Posterior vena cava (tissue), 2 donors: ENCODE measurements at regions of chr19 and their contacts with region 1.

Region 1: DNA sequence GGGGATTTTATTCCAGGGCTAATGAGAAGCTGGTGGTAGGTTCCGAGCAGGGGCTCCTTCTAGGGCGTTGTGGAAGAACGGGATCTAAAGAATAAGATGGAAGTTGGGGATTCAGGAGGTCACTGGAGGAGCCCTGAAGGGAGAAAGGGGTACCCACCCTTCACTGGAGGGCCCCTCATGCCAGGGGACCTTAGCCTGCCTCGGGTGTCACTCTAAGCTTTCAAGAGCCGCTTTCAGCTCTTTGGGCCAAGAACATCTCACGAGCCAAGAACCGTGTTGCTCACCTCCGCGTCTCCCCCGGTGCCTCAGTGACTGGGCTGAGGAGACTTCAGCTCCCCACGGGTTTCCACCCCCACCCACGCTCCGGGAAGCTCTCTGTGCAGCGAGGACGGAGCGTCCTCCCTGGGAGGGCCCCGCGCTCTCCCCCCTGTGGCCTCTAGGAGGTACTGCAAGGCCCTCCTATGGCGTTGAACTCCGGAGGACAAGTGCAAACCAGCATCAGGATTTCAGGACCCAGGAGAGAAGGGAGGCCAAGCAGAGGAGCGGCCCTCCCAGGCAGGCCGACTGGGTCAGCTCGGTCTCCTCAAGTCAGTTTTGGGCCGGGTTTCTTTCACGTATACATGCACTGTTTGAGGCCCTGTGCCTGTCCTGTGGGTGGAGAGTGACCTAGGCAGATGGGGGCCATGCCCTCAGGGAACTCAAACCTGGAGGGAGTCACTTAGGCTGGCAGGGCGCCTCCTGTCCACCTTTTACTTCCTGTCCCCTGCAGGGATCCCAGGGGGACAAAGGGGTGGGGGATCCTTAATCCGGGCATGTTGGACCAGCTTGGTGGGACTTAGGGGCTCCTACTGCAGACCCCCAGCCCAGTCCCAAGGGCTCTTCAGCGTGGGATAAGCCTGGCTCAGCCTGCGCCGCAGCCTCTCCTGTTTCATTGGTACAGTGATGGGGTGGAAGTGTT is 5.1 kb upstream of the KRTDAP start:
- DNase-seq: peak; percentile 91

Region 2: GRCh38 chr19:35269421-35270117 is 225.8 kb before region 1 on chr19:
- intact Hi-C with region 1: loop called in 1 of 2 experiments (anchors 10 kb)
- DNase-seq: peak; percentile 96

Region 3: GRCh38 chr19:35352448-35353304 is 142.7 kb before region 1 on chr19:
- intact Hi-C with region 1: loop called (anchors 10 kb)
- DNase-seq: peak; percentile 85